Aorta (tissue), 5 donors: ENCODE measurements at regions of chr17 and their contacts with region 1.

Region 1: GRCh38 chr17:57995076-57995956 is 7.3 kb upstream of the VEZF1 start:
- DNase-seq: peak; percentile 75 to 77
- ATAC-seq: peak; percentile 91
- H3K4me3 ChIP-seq: no peak overlapping the region
- H3K27ac ChIP-seq: peak overlapping the region in 1 of 2 donors; percentile 0
- H3K4me1 ChIP-seq: no peaks in the 10 kb centered on the region
- H3K27me3 ChIP-seq: no peaks in the 10 kb centered on the region

Region 2: GRCh38 chr17:57121338-57122042 is 873.8 kb before region 1 on chr17:
- intact Hi-C with region 1: loop called in 1 of 2 experiments (anchors 10 kb)
- DNase-seq: no peak
- ATAC-seq: no peak
- H3K4me3 ChIP-seq: no peak overlapping the region
- H3K27ac ChIP-seq: no peak overlapping the region
- H3K4me1 ChIP-seq: no peaks in the 10 kb centered on the region
- H3K27me3 ChIP-seq: no peaks in the 10 kb centered on the region

Region 3: DNA sequence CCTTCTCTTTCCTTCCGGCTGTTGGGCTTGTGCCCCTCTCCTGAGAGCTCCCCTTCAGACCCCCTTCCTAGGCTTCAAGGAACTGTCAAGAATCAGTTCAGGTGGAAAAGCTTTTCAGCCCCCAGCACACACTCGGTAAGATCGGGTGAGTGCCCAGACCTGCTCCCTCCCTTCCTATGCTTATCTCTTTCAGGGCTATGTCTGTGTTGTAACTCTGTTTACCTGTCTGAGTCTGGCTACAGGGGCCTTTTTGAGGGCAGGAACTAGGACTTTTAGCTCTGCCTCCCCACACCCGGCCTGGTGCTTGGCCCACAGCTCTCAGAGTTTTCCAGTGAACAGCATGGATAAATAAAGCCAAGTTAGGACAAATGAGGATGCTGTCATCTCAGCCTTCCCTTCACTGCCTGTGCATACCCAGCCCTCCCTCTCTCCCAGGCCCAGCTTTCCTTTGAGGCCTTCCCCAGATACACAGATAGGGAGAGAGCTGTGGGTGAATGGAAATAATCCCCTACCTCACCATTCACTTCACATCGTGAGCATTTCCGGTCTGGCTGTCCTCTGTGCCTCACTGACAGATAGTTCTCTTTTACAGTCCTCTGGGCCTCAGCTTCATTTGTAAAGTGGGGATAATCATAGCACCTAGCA is 139.8 kb before region 1 on chr17:
- intact Hi-C with region 1: loop called (anchors 1 to 2 kb)
- DNase-seq: peak in 1 of 2 donors; percentile 35
- ATAC-seq: no peak
- H3K4me3 ChIP-seq: no peak overlapping the region
- H3K27ac ChIP-seq: no peak overlapping the region
- H3K4me1 ChIP-seq: peaks cover 2 to 9% of the 10 kb centered on the region in 2 donors
- H3K27me3 ChIP-seq: no peaks in the 10 kb centered on the region